ENCODE measurements at regions of chr10 and their contacts with region 1.

Region 1: DNA sequence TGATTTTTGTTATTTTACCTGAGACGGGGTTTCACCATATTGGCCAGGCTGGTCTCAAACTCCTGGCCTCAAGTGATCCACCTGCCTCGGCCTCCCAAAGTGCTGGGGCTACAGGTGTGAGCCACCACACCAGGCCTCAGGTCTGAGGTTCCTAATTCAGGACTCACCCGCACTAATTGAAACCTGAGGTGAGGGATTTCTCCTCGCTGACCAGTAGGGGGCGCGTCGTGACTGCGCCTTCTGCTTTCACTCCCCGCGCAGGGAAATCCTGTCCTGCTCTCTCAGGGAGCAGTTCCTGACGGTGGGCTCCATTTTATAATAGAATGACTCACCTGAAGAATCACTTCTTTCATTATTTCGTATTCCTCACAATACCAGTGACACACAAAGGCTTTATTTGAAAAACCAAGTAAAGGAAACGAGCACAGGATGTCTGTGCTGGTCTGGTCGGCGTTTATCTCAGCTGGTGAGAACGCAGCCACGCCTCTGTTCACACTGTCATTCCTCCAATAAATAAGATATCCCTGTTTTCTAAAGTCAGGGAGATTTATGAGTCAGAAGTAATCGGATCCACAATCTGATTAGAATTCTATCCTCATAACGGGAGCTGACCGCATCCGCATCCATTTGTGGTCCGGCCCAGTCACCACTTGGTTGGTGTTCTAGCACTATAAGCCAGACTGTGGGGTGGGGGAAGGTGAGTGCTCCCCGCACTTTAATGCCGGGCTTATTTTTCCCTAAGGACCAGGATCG is 35.4 kb downstream of the BAG3 start:
- DNase-seq: peak; percentile 93
- H3K4me3 Mint-ChIP-seq: peak overlapping the region; percentile 23
- H3K27ac Mint-ChIP-seq: peak overlapping the region; percentile 63
- H3K4me1 Mint-ChIP-seq: peaks cover 25% of the 10 kb centered on the region
- H3K27me3 Mint-ChIP-seq: no peaks in the 10 kb centered on the region

Region 2: GRCh38 chr10:119705434-119705831 is 18.8 kb after region 1 on chr10:
- CTCF ChIA-PET with region 1: interaction called, 10 read pairs
- intact Hi-C with region 1: loop called (anchors 1 kb)
- DNase-seq: no peak
- H3K4me3 Mint-ChIP-seq: no peak overlapping the region
- H3K27ac Mint-ChIP-seq: peak overlapping the region; percentile 96
- H3K4me1 Mint-ChIP-seq: peaks cover 81% of the 10 kb centered on the region
- H3K27me3 Mint-ChIP-seq: no peaks in the 10 kb centered on the region

Region 3: GRCh38 chr10:119750391-119751230 is 64.0 kb after region 1 on chr10:
- CTCF ChIA-PET with region 1: interaction called, 54 read pairs
- intact Hi-C with region 1: loop called (anchors 1 kb)
- DNase-seq: peak; percentile 82
- H3K4me3 Mint-ChIP-seq: no peak overlapping the region
- H3K27ac Mint-ChIP-seq: no peak overlapping the region
- H3K4me1 Mint-ChIP-seq: peaks cover 11% of the 10 kb centered on the region
- H3K27me3 Mint-ChIP-seq: no peaks in the 10 kb centered on the region

Region 4: GRCh38 chr10:119872860-119873681 is 186.5 kb after region 1 on chr10:
- CTCF ChIA-PET with region 1: interaction called, 4 read pairs
- intact Hi-C with region 1: loop called (anchors 1 kb)
- DNase-seq: peak; percentile 84
- H3K4me3 Mint-ChIP-seq: peak overlapping the region; percentile 83
- H3K27ac Mint-ChIP-seq: peak overlapping the region; percentile 84
- H3K4me1 Mint-ChIP-seq: peaks cover 38% of the 10 kb centered on the region
- H3K27me3 Mint-ChIP-seq: no peaks in the 10 kb centered on the region

Region 5: DNA sequence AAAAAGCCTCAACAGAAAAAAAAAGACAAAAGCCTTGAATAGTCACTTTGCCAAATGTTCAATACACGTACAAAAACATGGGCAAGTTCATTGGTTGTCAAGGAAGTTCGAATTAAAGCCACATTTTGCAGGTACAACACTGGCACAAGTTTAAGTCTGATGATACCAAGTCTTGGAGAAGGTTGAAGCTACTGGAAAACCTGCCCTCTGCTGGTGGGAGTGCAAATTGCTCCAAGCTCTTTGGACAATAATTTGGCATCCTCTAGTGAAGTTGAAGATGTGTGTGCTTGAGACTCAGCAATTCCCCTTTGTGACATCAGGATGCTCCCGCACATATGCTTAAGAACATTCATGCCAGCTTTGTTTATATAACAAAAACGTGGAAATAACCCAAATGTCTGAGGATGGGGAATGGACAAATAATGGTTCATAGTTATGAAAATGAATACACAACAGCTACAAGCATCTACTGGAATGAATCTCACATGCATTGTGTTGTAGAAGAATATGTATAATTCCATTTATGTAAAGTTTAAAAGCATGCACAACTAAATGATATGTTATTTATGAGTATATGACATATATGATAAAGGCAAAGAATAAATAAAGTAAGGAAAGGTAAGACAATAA is 650.4 kb after region 1 on chr10:
- CTCF ChIA-PET with region 1: interaction called, 3 read pairs
- intact Hi-C with region 1: loop called (anchors 1 kb)
- DNase-seq: peak; percentile 80
- H3K4me3 Mint-ChIP-seq: no peak overlapping the region
- H3K27ac Mint-ChIP-seq: no peak overlapping the region
- H3K4me1 Mint-ChIP-seq: no peaks in the 10 kb centered on the region
- H3K27me3 Mint-ChIP-seq: peaks cover 12% of the 10 kb centered on the region

Measured in activated naive CD4-positive, alpha-beta T cell treated with anti-CD3 and anti-CD28 coated beads for 36 hours (primary cell).